ENCODE measurements at regions of chr4 and their contacts with region 1.

Region 1: DNA sequence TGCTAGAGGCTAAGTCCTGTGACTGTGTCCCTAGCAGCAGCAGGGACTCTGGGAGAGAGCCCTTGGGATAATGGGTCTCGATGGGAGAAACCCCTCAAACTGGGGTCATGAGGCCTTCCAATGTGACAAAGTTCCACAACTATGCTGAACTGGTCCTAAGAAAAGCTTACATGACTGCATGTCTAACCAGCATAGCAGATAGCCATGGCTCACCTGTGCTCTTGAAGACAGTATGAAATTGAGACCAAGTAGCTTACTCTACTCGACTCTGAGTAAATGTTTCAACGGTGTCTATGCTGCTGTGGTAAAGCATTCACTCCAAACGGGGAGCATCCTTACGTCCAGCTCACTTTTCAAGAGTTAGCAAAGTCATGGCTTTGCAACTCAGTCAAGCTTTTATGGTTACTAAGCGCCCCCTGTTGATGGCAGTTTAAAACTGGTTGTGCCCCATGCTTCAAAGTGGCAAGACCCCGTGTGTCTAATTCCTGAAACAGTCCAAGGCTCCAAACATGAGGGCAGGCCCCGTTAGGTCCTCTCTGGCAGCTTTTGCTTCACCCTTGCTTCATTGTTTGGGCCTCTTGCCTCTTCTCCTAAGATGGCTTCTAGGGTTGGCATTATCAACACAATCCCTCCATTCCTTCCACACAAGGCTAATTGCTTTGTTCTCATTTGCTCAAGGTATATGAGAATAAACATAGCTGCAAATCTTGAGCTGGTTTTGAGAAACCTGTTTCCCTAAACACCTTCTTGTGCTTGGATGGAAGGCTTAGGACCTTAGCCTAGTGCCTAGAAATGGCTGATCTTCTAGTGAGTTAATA is 46.6 kb downstream of the CCNG2 start:
- DNase-seq: peak; percentile 82
- ATAC-seq: peak; percentile 93
- H3K4me3 ChIP-seq: no peak overlapping the region
- H3K27ac ChIP-seq: no peak overlapping the region
- H3K4me1 ChIP-seq: no peaks in the 10 kb centered on the region
- H3K27me3 ChIP-seq: peaks cover 50% of the 10 kb centered on the region
- CTCF ChIP-seq: peak; percentile 86
- POLR2A ChIP-seq: no peak
- RAD21 ChIP-seq: peak; percentile 94

Region 2: DNA sequence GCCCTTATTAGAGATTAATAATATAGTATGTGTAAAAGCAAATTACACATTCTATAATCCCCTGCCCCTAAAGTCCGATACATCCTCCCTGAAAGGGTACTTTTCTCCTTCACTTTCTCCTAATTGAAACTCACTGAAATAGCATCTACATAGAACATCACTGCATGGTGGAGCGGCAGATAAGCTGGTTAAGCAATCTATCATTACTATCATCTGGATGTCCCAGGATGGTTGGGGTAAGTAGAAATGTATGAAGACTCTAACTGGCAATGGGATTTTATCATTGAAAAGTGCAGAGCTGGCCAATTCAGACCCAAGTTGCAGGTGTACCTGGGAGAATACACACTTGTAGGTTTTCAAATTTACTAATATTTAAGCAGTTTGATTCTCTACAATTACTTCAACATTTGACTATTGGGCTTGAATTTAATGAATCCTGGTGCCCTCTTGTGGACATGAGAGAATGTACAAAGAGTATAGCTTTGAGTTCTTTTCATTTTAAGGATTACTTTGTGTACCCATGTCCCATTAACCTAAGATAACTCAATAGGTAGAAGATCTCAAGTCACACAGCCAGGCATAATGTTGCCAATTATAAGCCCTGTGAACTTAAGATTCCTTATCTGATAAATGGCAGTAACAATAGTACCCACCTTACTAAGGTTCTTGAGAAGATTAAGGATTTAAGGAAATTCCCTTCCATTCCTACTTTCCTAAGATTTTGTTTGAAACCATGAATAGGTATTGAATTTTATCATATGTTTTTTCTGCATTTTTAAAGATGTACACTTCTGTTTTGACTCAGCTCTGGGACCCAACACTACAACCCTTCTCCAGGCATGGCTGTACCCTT is 698.8 kb before region 1 on chr4:
- CTCF ChIA-PET with region 1: no interaction called
- POLR2A ChIA-PET with region 1: no interaction called
- dilution Hi-C with region 1: no loop called
- in situ Hi-C with region 1: loop called (anchors 10 kb)
- intact Hi-C with region 1: no loop called
- DNase-seq: peak; percentile 63
- ATAC-seq: peak; percentile 85
- H3K4me3 ChIP-seq: no peak overlapping the region
- H3K27ac ChIP-seq: no peak overlapping the region
- H3K4me1 ChIP-seq: no peaks in the 10 kb centered on the region
- H3K27me3 ChIP-seq: peaks cover 22% of the 10 kb centered on the region
- CTCF ChIP-seq: peak; percentile 69
- POLR2A ChIP-seq: no peak
- RAD21 ChIP-seq: peak; percentile 64

Region 3: GRCh38 chr4:77044461-77045150 is 159.0 kb before region 1 on chr4:
- CTCF ChIA-PET with region 1: interaction called, 6 read pairs
- POLR2A ChIA-PET with region 1: no interaction called
- dilution Hi-C with region 1: no loop called
- in situ Hi-C with region 1: no loop called
- intact Hi-C with region 1: loop called (anchors 1 kb)
- DNase-seq: peak; percentile 80
- ATAC-seq: peak; percentile 36; the same call in 1 of the 2 replicates
- H3K4me3 ChIP-seq: no peak overlapping the region
- H3K27ac ChIP-seq: peak overlapping the region; percentile 12; the same call in 1 of the 2 replicates
- H3K4me1 ChIP-seq: peaks cover 10% of the 10 kb centered on the region
- H3K27me3 ChIP-seq: no peaks in the 10 kb centered on the region
- CTCF ChIP-seq: peak; percentile 64
- POLR2A ChIP-seq: no peak
- RAD21 ChIP-seq: peak; percentile 40

Region 4: GRCh38 chr4:77075869-77076799 is 127.5 kb before region 1 on chr4 and contains the start of gene CCNI:
- CTCF ChIA-PET with region 1: interaction called, 4 read pairs
- POLR2A ChIA-PET with region 1: interaction called, 3 read pairs
- dilution Hi-C with region 1: no loop called
- in situ Hi-C with region 1: no loop called
- intact Hi-C with region 1: loop called (anchors 2 kb)
- DNase-seq: peak; percentile 97
- ATAC-seq: peak; percentile 89
- H3K4me3 ChIP-seq: peak within 1 kb of the TSS; percentile 58
- H3K27ac ChIP-seq: peak within 1 kb of the TSS; percentile 93
- H3K4me1 ChIP-seq: no peaks in the 10 kb centered on the region
- H3K27me3 ChIP-seq: no peaks in the 10 kb centered on the region
- CTCF ChIP-seq: no peak
- POLR2A ChIP-seq: peak; percentile 97
- RAD21 ChIP-seq: no peak
- total RNA-seq, gene CCNI: 98.6 and 100 TPM in 2 replicates

Measured in IMR-90 (cell line).